CD4-positive, alpha-beta memory T cell (primary cell): ENCODE measurements at regions of chr5 and their contacts with region 1.

Region 1: DNA sequence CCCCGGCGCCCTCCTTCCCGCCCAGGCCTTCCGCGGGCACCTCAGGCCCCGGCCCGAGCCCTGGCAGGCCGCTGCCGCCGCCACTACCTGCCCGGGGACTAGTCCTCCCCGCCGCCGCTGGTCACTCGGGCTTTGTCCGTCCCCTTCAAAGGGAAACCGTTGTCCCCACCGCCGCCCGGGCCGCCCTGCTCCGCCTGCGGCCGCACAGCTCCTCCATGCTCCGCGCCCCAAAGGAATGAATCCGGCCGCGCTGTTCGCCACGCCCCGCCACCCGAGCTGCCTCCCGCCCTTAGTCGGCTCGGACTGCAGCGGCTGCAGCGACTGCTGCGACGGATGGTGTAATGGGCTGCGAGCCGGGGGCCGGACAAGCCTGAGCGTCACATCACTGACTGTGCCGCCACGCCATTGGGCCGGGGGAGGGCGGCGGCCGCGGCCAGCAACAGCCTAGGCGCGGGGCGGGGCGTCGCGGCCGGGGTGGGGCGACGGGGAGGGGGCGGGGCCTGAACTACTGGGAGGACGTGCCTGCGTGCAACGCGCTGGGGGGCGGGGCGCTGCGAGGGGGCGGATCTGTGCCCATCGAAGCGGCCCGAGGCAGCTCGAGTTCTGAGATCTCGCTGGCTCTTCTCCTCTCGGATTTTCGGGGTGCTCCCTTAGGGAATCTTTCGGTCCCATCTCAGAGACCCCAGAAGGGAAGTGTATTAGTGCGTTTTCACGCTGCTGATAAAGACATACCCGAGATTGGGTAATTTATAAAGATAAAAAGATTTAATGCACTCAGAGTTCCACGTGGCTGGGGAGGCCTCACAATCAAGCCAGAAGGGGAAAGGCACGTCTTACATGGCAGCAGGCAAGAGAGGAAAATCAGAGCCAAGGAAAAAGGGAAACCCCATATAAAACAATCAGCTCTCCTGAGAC is at the start of gene FEM1C:
- DNase-seq: peak; percentile 91 to 95 (median 92)
- H3K4me3 ChIP-seq: peak within 1 kb of the TSS; percentile 64 to 71
- H3K4me3 Mint-ChIP-seq: peak within 1 kb of the TSS; percentile 93 to 100 (median 95)
- H3K27ac ChIP-seq: peak within 1 kb of the TSS; percentile 97
- H3K27ac Mint-ChIP-seq: peak within 1 kb of the TSS; percentile 97 to 99 (median 98)
- H3K4me1 ChIP-seq: peaks cover 44% of the 10 kb centered on the region
- H3K4me1 Mint-ChIP-seq: peaks cover 30 to 53% (median 38%) of the 10 kb centered on the region in 4 donors
- H3K27me3 ChIP-seq: no peaks in the 10 kb centered on the region
- H3K27me3 Mint-ChIP-seq: no peaks in the 10 kb centered on the region
- total RNA-seq, gene FEM1C: 17.4 to 19.7 TPM

Region 2: DNA sequence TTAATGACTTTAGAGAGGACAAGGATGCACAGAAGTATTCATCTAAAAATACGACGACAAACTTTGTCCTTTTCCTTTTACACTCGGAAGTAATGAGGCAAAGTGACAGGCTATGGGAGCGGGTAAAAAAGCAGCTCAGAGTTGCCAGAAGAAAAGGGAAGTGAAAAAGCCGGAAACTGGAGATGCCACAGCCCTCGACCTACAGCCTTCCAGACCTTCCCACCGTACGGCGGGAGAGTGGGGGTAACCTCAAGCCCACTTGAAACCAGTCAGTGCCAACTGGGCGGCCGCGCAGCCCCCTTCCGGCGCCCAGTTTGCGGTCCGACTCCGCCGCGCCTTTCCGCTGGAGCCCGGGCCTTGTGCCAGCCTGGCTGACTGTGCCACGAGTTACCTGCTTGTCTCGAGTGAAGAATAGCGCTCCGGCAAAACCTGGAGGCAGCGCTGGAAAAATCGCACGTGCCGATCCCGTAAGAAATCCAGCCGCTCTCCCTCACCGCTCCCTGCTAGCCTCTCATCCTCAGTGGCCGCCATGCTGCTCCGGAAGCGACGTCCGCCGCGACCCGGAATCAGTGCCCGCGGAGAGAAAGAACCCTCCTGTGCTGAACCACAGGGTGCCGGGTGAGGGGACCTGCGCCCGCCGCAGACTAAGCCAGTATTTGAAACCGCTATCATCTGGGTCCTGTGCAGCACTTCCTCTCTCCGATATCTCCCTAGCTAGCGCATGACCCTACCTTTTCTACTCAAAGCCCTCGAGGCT is 282.2 kb before region 1 on chr5 and contains the start of gene PGGT1B:
- CTCF ChIA-PET with region 1: no interaction called
- POLR2A ChIA-PET with region 1: interaction called, 19 read pairs
- intact Hi-C with region 1: loop called (anchors 2 kb)
- DNase-seq: peak; percentile 59 to 67 (median 66)
- H3K4me3 ChIP-seq: peak within 1 kb of the TSS; percentile 55 to 80
- H3K4me3 Mint-ChIP-seq: peak within 1 kb of the TSS; percentile 87 to 98 (median 98)
- H3K27ac ChIP-seq: peak within 1 kb of the TSS; percentile 77
- H3K27ac Mint-ChIP-seq: peak within 1 kb of the TSS; percentile 85 to 98 (median 95)
- H3K4me1 ChIP-seq: peaks cover 45% of the 10 kb centered on the region
- H3K4me1 Mint-ChIP-seq: peaks cover 37 to 52% (median 44%) of the 10 kb centered on the region in 4 donors
- H3K27me3 ChIP-seq: no peaks in the 10 kb centered on the region
- H3K27me3 Mint-ChIP-seq: no peaks in the 10 kb centered on the region
- total RNA-seq, gene PGGT1B: 40.6 to 42.4 TPM

Region 3: DNA sequence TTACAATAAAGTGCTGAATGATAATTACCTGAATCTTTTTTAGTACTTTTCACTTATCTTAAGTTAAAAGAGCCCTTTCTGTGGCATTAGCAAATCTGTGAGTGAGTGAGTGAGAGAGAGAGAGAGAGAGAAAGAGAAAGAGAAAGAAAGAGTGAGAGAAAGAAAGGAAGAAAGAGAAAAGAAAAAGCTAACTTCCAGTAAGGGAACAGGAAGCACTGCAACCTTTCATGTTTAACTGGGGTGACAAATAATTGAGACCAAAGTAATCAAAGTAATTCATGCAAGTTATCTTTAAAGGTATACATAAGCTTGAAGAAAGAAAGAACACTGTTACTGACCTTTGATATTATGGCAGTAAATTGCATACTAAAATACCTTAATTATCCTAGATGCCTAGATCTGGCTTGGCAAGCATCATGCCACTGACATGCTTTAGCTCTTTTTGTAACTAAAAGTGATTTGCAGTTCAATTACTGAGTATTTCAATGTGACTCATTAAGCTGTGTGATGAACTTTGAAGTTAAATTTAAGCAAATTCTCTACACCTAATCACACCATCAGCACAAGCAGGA is 21.8 kb before region 1 on chr5:
- CTCF ChIA-PET with region 1: interaction called, 3 read pairs
- POLR2A ChIA-PET with region 1: interaction called, 13 read pairs
- intact Hi-C with region 1: no loop called
- DNase-seq: no peak
- H3K4me3 ChIP-seq: no peak overlapping the region
- H3K4me3 Mint-ChIP-seq: peak overlapping the region in 4 of 8 donors; percentile 1 to 40 (median 2)
- H3K27ac ChIP-seq: no peak overlapping the region
- H3K27ac Mint-ChIP-seq: peak overlapping the region in 2 of 7 donors; percentile 6 to 50
- H3K4me1 ChIP-seq: peaks cover 13% of the 10 kb centered on the region
- H3K4me1 Mint-ChIP-seq: peaks cover 26 to 43% (median 31%) of the 10 kb centered on the region in 4 donors
- H3K27me3 ChIP-seq: no peaks in the 10 kb centered on the region
- H3K27me3 Mint-ChIP-seq: no peaks in the 10 kb centered on the region

Region 4: GRCh38 chr5:115573133-115573532 is 28.4 kb after region 1 on chr5:
- CTCF ChIA-PET with region 1: interaction called, 13 read pairs
- POLR2A ChIA-PET with region 1: no interaction called
- intact Hi-C with region 1: no loop called
- DNase-seq: no peak
- H3K4me3 ChIP-seq: no peak overlapping the region
- H3K4me3 Mint-ChIP-seq: no peak overlapping the region
- H3K27ac ChIP-seq: no peak overlapping the region
- H3K27ac Mint-ChIP-seq: no peak overlapping the region
- H3K4me1 ChIP-seq: no peaks in the 10 kb centered on the region
- H3K4me1 Mint-ChIP-seq: peaks cover 0 to 2% (median under 1%) of the 10 kb centered on the region in 4 donors
- H3K27me3 ChIP-seq: peaks cover 4% of the 10 kb centered on the region
- H3K27me3 Mint-ChIP-seq: peaks cover 2 to 3% of the 10 kb centered on the region in 2 donors

Region 5: DNA sequence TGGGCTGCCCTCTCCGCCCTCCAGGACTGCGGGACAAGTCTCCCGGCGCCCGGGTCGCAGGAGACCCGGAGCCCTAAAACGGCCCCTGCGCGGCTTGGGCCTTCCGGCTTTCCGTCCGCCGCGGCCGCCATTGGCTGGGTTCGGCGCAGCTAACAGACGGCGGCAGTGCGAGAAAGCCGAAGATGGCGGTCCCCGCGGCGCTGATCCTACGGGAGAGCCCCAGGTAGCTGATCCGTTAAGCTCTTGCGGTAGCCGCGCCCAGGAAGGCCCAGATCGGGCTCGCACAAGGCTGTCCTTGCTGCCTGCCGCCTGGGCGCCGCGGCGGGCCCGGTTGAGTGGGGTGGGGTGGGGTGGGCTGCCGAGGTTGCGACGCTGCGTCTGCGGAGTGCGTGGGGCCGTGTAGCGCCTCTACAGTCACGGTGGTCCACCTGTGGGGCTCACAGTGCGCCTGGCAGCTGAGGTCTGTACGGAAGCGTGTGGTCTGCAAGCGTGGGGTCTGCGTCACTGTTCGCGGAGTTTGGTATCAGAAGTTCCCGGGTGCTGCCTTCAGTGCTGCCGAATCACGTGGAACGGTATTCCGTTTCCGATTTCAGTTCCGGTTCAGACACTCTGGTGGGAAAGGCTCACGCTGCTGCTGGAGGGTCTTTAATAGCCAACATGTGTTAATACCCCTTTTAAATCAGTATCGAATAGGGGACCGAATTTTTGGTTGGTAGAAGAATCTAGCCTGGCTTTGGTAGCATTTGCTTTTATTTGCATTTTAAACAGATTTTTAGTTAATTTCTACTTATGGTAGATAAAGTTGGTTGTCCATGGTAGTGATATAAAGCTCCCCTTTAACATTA is 540.4 kb after region 1 on chr5 and contains the start of gene COMMD10:
- CTCF ChIA-PET with region 1: no interaction called
- POLR2A ChIA-PET with region 1: interaction called, 11 read pairs
- intact Hi-C with region 1: loop called (anchors 2 kb)
- DNase-seq: peak; percentile 79 to 88 (median 83)
- H3K4me3 ChIP-seq: peak within 1 kb of the TSS; percentile 76 to 96
- H3K4me3 Mint-ChIP-seq: peak within 1 kb of the TSS; percentile 92 to 96 (median 96)
- H3K27ac ChIP-seq: peak within 1 kb of the TSS; percentile 78
- H3K27ac Mint-ChIP-seq: peak within 1 kb of the TSS; percentile 92 to 99 (median 98)
- H3K4me1 ChIP-seq: peaks cover 33% of the 10 kb centered on the region
- H3K4me1 Mint-ChIP-seq: peaks cover 31 to 65% (median 43%) of the 10 kb centered on the region in 4 donors
- H3K27me3 ChIP-seq: no peaks in the 10 kb centered on the region
- H3K27me3 Mint-ChIP-seq: no peaks in the 10 kb centered on the region
- total RNA-seq, gene COMMD10: 31.4 to 32.0 TPM